ENCODE measurements at regions of chrX and their contacts with region 1.

Region 1: DNA sequence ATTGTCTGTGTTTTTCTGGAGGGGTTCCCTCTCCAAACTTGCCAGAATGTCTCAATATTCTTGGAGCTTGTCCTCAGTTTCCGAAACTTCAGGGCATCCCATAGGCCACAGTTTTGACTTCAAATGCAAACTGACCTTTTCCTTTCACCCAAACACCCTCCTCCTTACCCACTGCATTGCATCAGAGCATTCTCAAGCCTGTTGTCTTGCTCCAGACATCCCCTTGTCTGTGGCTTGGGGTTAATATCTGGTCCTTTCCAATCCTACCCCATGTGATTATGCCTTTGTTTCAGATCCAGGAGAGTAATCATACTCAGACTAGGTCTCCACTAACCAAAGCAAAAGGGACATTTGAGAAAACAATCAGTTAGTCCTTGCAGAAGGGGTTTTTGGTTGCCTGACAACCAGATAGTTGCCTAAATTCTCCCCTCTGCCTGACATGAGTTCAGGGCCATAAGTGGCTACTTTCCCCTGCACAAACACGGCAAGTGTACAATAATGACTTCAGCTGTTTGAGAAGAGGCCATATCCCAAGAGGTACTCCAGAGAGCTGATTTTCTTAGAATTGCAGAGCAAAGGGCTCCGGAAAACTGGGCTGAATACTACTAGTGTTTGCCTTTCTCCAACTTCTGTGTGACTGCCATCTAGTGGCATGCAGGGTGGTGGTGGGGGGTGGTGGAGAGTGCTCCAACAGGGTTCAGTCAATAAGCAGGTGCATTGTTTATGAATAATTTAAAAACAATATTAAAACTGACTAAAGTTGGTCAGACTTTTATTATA is 130.2 kb downstream of the CHRDL1 start:
- DNase-seq: peak; percentile 69
- H3K4me3 Mint-ChIP-seq: no peak overlapping the region
- H3K27ac Mint-ChIP-seq: no peak overlapping the region
- H3K4me1 Mint-ChIP-seq: no peaks in the 10 kb centered on the region
- H3K27me3 Mint-ChIP-seq: peaks cover 10% of the 10 kb centered on the region
- CTCF ChIP-seq: peak; percentile 45

Region 2: GRCh38 chrX:110241816-110242215 is 423.6 kb before region 1 on chrX:
- CTCF ChIA-PET with region 1: no interaction called
- intact Hi-C with region 1: no loop called
- DNase-seq: no peak
- H3K4me3 Mint-ChIP-seq: no peak overlapping the region
- H3K27ac Mint-ChIP-seq: no peak overlapping the region
- H3K4me1 Mint-ChIP-seq: peaks cover 64% of the 10 kb centered on the region
- H3K27me3 Mint-ChIP-seq: no peaks in the 10 kb centered on the region
- CTCF ChIP-seq: no peak

Region 3: DNA sequence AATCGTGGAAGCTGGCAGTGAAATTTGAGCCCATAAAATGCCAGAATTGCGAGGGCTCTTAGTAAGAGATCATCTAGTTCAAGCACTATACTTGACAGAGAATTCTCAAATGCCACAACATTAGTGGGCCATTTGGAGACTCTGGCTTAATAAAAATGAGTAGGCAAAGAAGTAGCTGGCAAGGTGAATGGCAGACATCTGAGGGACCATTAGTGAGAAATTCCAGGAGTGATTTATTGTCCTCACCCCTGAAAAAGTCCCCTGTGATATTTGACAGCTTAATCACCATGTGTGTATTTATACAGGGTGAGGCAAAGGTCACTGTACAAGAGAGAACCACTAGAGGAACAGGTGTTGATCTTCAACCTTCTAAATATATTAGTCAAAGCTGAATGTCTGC is 77.2 kb before region 1 on chrX:
- CTCF ChIA-PET with region 1: no interaction called
- intact Hi-C with region 1: loop called (anchors 5 kb)
- DNase-seq: no peak
- H3K4me3 Mint-ChIP-seq: no peak overlapping the region
- H3K27ac Mint-ChIP-seq: no peak overlapping the region
- H3K4me1 Mint-ChIP-seq: no peaks in the 10 kb centered on the region
- H3K27me3 Mint-ChIP-seq: peaks cover 7% of the 10 kb centered on the region
- CTCF ChIP-seq: no peak

Region 4: GRCh38 chrX:111098874-111099273 is 433.5 kb after region 1 on chrX:
- CTCF ChIA-PET with region 1: no interaction called
- intact Hi-C with region 1: no loop called
- DNase-seq: peak; percentile 60
- H3K4me3 Mint-ChIP-seq: no peak overlapping the region
- H3K27ac Mint-ChIP-seq: no peak overlapping the region
- H3K4me1 Mint-ChIP-seq: peaks cover 8% of the 10 kb centered on the region
- H3K27me3 Mint-ChIP-seq: peaks cover 48% of the 10 kb centered on the region
- CTCF ChIP-seq: peak; percentile 70

Measured in Calu3 (cell line).